HEK293 (cell line): ENCODE measurements at regions of chr12 and their contacts with region 1.

Region 1: DNA sequence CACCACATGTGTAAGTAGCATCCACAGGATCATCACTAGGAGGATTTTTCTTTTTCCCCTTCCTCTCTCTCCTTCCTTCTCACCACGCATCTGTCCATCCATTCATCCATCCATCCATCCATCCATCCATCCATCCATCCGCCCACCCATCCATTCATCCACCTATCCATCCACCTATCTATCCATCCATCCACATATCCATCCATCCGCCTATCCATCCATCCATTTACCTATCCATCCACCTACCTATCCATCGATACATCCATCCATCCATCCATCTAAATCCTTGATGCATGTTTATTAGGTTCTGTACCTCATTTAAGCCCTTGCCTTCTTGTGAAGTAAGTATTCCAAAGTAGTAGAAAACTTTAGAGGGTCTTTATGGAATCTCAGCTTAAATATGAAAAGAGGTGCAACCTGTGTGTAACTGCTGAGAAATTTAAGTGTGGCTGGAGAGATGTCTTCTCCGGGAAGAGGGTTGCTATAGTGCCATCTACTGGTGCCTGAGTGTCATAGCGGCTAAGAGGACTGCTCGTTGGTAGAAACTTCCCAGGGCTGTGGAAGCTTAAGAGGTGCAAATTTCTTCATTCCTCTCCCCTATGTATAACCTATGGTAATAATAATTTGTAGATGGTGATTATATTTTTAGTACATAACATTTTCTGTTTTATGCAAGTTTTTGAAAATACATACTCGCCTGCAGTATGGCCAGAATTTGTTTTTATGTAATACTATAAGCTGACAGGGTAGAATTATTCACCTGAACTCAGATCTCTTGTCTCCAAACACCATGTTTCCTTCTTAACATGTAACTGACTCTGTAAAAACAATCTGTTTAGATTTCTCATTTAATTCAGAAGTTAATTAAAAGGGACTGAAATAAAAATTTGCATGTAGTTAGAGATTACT is 46.0 kb downstream of the MYO1H start:
- H3K4me3 ChIP-seq: no peak overlapping the region
- H3K27ac ChIP-seq: no peak overlapping the region
- H3K4me1 ChIP-seq: no peaks in the 10 kb centered on the region
- CTCF ChIP-seq: no peak

Region 2: GRCh38 chr12:109346920-109347319 is 46.8 kb before region 1 on chr12:
- CTCF ChIA-PET with region 1: interaction called, 17 read pairs
- POLR2A ChIA-PET with region 1: no interaction called
- H3K4me3 ChIP-seq: no peak overlapping the region
- H3K27ac ChIP-seq: no peak overlapping the region
- H3K4me1 ChIP-seq: no peaks in the 10 kb centered on the region
- CTCF ChIP-seq: no peak

Region 3: GRCh38 chr12:109377139-109377685 is 16.5 kb before region 1 on chr12:
- CTCF ChIA-PET with region 1: interaction called, 42 read pairs
- POLR2A ChIA-PET with region 1: no interaction called
- H3K4me3 ChIP-seq: no peak overlapping the region
- H3K27ac ChIP-seq: no peak overlapping the region
- H3K4me1 ChIP-seq: no peaks in the 10 kb centered on the region
- CTCF ChIP-seq: no peak